CD8-positive, alpha-beta T cell (primary cell): ENCODE measurements at regions of chr4 and their contacts with region 1.

Region 1: GRCh38 chr4:38675146-38676121 is 11.4 kb downstream of the KLF3 start:
- DNase-seq: peak; percentile 73 to 91 (median 86)
- ATAC-seq: peak; percentile 59
- H3K4me3 ChIP-seq: peak overlapping the region in 1 of 2 experiments; percentile 15
- H3K4me3 Mint-ChIP-seq: peak overlapping the region; percentile 71
- H3K27ac ChIP-seq: peak overlapping the region in 1 of 2 experiments; percentile 66
- H3K27ac Mint-ChIP-seq: peak overlapping the region; percentile 93
- H3K4me1 ChIP-seq: peaks cover 79% of the 10 kb centered on the region
- H3K4me1 Mint-ChIP-seq: peaks cover 88% of the 10 kb centered on the region
- H3K27me3 ChIP-seq: no peaks in the 10 kb centered on the region
- H3K27me3 Mint-ChIP-seq: no peaks in the 10 kb centered on the region
- CTCF ChIP-seq: peak; percentile 92

Region 2: GRCh38 chr4:38062088-38062893 is 613.1 kb before region 1 on chr4:
- CTCF ChIA-PET with region 1: interaction called, 5 read pairs
- POLR2A ChIA-PET with region 1: no interaction called
- intact Hi-C with region 1: loop called (anchors 1 to 5 kb)
- DNase-seq: peak; percentile 24 to 80 (median 67)
- ATAC-seq: peak; percentile 59
- H3K4me3 ChIP-seq: peak overlapping the region in 1 of 2 experiments; percentile 13
- H3K4me3 Mint-ChIP-seq: peak overlapping the region; percentile 83
- H3K27ac ChIP-seq: no peak overlapping the region
- H3K27ac Mint-ChIP-seq: peak overlapping the region; percentile 11
- H3K4me1 ChIP-seq: no peaks in the 10 kb centered on the region
- H3K4me1 Mint-ChIP-seq: peaks cover 12% of the 10 kb centered on the region
- H3K27me3 ChIP-seq: no peaks in the 10 kb centered on the region
- H3K27me3 Mint-ChIP-seq: no peaks in the 10 kb centered on the region
- CTCF ChIP-seq: peak; percentile 97

Region 3: GRCh38 chr4:38324861-38325628 is 350.4 kb before region 1 on chr4:
- CTCF ChIA-PET with region 1: interaction called, 143 read pairs
- POLR2A ChIA-PET with region 1: interaction called, 17 read pairs
- intact Hi-C with region 1: loop called in 1 of 2 experiments (anchors 1 kb)
- DNase-seq: no peak
- ATAC-seq: no peak
- H3K4me3 ChIP-seq: no peak overlapping the region
- H3K4me3 Mint-ChIP-seq: no peak overlapping the region
- H3K27ac ChIP-seq: no peak overlapping the region
- H3K27ac Mint-ChIP-seq: no peak overlapping the region
- H3K4me1 ChIP-seq: peaks cover 67% of the 10 kb centered on the region
- H3K4me1 Mint-ChIP-seq: peaks cover 85% of the 10 kb centered on the region
- H3K27me3 ChIP-seq: no peaks in the 10 kb centered on the region
- H3K27me3 Mint-ChIP-seq: no peaks in the 10 kb centered on the region
- CTCF ChIP-seq: no peak

Region 4: DNA sequence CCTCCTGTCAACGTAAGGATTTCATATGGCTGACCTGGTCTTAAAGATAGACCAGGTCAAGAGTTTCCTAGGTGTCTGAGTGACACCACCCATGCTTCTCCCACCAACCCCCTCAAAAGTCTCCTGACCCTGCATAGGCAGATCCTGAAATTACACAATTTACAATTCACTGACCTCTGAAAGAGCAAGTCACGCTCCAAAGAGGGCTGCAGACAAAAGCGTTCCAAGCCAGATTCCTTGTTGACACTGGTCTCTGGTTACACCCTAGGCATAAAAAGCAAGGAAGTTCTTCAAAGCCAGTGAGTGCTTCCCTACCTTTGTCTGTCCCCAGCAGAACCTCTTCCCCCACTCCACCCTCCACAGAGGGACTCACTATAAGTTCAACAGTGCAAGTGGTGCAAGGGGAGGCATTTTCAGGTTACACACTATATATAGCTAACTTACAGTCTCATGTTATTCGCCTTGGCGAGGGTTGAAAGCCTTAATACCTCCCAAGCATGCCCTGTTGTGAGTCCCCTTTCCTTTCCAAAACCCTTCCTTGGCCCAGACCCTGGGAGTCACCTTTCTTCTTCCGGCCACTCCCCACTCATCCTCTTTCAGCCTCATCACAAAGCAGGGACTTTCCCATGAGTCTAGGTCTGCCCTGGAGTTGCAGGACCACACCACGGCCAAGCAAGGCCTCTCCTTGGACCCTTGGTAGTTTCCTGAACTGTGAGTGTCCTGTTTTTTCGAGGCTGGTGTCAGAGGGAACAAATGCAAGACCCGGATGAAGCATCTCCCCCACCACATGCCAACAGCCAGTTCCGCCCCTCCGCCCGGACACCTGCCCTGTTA is 69.5 kb before region 1 on chr4:
- CTCF ChIA-PET with region 1: interaction called, 3 read pairs
- POLR2A ChIA-PET with region 1: no interaction called
- intact Hi-C with region 1: loop called in 1 of 2 experiments (anchors 5 kb)
- DNase-seq: no peak
- ATAC-seq: no peak
- H3K4me3 ChIP-seq: no peak overlapping the region
- H3K4me3 Mint-ChIP-seq: no peak overlapping the region
- H3K27ac ChIP-seq: no peak overlapping the region
- H3K27ac Mint-ChIP-seq: peak overlapping the region; percentile 24
- H3K4me1 ChIP-seq: peaks cover 19% of the 10 kb centered on the region
- H3K4me1 Mint-ChIP-seq: peaks cover 44% of the 10 kb centered on the region
- H3K27me3 ChIP-seq: no peaks in the 10 kb centered on the region
- H3K27me3 Mint-ChIP-seq: no peaks in the 10 kb centered on the region
- CTCF ChIP-seq: no peak

Region 5: GRCh38 chr4:38687571-38688011 is 12.2 kb after region 1 on chr4:
- CTCF ChIA-PET with region 1: interaction called, 10 read pairs
- POLR2A ChIA-PET with region 1: no interaction called
- intact Hi-C with region 1: no loop called
- DNase-seq: peak in 1 of 9 experiments; percentile 33
- ATAC-seq: no peak
- H3K4me3 ChIP-seq: no peak overlapping the region
- H3K4me3 Mint-ChIP-seq: no peak overlapping the region
- H3K27ac ChIP-seq: peak overlapping the region in 1 of 2 experiments; percentile 16
- H3K27ac Mint-ChIP-seq: peak overlapping the region; percentile 12
- H3K4me1 ChIP-seq: peaks cover 48% of the 10 kb centered on the region
- H3K4me1 Mint-ChIP-seq: peaks cover 71% of the 10 kb centered on the region
- H3K27me3 ChIP-seq: no peaks in the 10 kb centered on the region
- H3K27me3 Mint-ChIP-seq: no peaks in the 10 kb centered on the region
- CTCF ChIP-seq: no peak

Region 6: DNA sequence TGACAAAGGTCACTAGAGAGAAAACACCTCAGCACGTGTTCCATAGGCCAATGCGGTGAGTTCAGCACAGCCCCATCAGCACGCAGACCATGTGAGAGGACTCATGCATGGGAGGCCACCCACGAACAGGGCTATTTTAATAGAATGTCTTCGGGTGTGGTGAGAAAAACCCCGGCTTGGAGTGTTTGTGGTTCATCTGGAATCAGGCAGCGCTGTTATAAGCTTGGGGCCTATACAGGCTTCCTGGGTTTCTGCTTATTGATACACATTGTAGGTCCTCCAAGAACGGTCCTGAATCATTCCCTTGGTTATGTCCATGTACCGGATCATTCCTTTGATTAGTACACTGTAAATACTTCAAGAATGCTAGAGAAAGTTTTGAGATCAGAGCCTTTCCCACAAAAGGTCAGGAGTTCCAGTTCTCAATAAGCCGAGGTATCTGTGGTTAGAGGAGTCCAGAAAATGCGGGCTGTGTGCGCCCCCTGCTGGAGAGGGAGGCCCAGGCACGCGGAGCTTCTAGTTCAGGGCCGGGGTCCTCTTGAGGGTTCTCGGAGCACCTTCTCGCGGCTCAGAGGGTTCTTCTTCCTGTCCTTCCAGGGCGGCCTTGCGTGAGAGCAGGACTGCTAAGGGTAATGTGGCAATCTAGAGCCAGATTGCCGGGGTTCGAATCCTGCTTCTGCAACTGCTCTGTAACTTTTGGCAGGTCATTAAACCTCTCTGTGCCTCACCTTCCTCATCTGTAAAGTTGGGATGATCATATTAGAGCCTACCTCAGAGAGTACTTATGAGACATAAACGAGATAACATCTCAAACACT is 55.6 kb after region 1 on chr4:
- CTCF ChIA-PET with region 1: interaction called, 36 read pairs
- POLR2A ChIA-PET with region 1: no interaction called
- intact Hi-C with region 1: loop called (anchors 1 to 2 kb)
- DNase-seq: peak; percentile 60 to 90 (median 81)
- ATAC-seq: peak; percentile 75
- H3K4me3 ChIP-seq: no peak overlapping the region
- H3K4me3 Mint-ChIP-seq: no peak overlapping the region
- H3K27ac ChIP-seq: no peak overlapping the region
- H3K27ac Mint-ChIP-seq: no peak overlapping the region
- H3K4me1 ChIP-seq: peaks cover 7% of the 10 kb centered on the region
- H3K4me1 Mint-ChIP-seq: peaks cover 11% of the 10 kb centered on the region
- H3K27me3 ChIP-seq: no peaks in the 10 kb centered on the region
- H3K27me3 Mint-ChIP-seq: no peaks in the 10 kb centered on the region
- CTCF ChIP-seq: peak; percentile 91